ENCODE measurements at regions of chr1 and their contacts with region 1.

Region 1: DNA sequence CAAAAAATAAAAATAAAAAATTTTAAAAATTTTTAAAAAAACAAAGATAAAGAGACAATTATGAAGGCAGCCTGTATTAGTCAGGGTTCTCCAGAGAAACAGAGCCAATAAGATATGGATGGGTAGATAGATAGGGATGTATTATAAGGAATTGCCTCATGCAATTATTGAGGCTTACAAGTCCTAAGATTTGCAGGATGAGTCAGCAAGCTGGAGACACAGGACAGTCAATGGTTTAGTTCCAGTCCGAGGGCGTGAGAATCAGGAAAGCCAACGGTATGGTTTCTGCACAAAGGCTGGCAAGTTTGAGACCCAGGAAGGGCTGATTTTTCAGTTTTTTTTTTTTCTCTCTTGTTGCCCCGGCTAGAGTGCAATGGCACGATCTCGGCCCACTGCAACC is 24.1 kb upstream of the EIF4G3 start:
- DNase-seq: peak; percentile 62
- ATAC-seq: peak; percentile 43; the same call in 1 of the 2 replicates
- H3K4me3 ChIP-seq: no peak overlapping the region
- H3K27ac ChIP-seq: no peak overlapping the region
- H3K4me1 ChIP-seq: no peaks in the 10 kb centered on the region
- H3K27me3 ChIP-seq: no peaks in the 10 kb centered on the region
- CTCF ChIP-seq: no peak
- POLR2A ChIP-seq: no peak
- RAD21 ChIP-seq: no peak

Region 2: DNA sequence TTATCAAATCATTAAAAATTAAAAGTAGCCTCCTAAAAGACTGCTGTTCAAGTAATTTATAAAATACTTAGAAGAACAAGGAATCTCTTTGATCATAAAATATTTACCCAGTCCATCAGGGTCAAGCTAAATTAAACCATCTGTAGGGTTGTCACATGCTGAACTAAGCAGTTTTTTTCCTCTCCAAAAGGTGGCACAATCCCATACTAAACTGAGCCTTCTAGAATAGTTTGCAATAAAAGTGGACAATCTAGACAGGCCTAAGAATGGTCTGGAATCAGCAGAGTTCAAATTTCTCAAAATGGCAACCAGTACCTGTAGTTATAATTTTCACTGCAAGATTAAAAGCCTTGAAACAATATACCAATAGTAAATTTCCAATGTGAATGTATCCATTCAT is 218.9 kb before region 1 on chr1:
- CTCF ChIA-PET with region 1: interaction called, 9 read pairs
- POLR2A ChIA-PET with region 1: interaction called, 4 read pairs
- dilution Hi-C with region 1: no loop called
- in situ Hi-C with region 1: loop called (anchors 10 kb)
- intact Hi-C with region 1: loop called (anchors 5 kb)
- DNase-seq: peak; percentile 14
- ATAC-seq: peak; percentile 45; the same call in 1 of the 2 replicates
- H3K4me3 ChIP-seq: no peak overlapping the region
- H3K27ac ChIP-seq: no peak overlapping the region
- H3K4me1 ChIP-seq: peaks cover 8% of the 10 kb centered on the region
- H3K27me3 ChIP-seq: no peaks in the 10 kb centered on the region
- CTCF ChIP-seq: peak; percentile 32
- POLR2A ChIP-seq: no peak
- RAD21 ChIP-seq: no peak

Region 3: GRCh38 chr1:21324368-21325141 is 123.8 kb after region 1 on chr1:
- CTCF ChIA-PET with region 1: no interaction called
- POLR2A ChIA-PET with region 1: no interaction called
- dilution Hi-C with region 1: no loop called
- in situ Hi-C with region 1: no loop called
- intact Hi-C with region 1: no loop called
- DNase-seq: peak; percentile 91
- ATAC-seq: peak; percentile 79
- H3K4me3 ChIP-seq: no peak overlapping the region
- H3K27ac ChIP-seq: peak overlapping the region; percentile 95
- H3K4me1 ChIP-seq: peaks cover 71% of the 10 kb centered on the region
- H3K27me3 ChIP-seq: no peaks in the 10 kb centered on the region
- CTCF ChIP-seq: no peak
- POLR2A ChIP-seq: peak; percentile 11; the same call in 1 of the 2 replicates
- RAD21 ChIP-seq: no peak